ENCODE measurements at regions of chr22 and their contacts with region 1.

Region 1: DNA sequence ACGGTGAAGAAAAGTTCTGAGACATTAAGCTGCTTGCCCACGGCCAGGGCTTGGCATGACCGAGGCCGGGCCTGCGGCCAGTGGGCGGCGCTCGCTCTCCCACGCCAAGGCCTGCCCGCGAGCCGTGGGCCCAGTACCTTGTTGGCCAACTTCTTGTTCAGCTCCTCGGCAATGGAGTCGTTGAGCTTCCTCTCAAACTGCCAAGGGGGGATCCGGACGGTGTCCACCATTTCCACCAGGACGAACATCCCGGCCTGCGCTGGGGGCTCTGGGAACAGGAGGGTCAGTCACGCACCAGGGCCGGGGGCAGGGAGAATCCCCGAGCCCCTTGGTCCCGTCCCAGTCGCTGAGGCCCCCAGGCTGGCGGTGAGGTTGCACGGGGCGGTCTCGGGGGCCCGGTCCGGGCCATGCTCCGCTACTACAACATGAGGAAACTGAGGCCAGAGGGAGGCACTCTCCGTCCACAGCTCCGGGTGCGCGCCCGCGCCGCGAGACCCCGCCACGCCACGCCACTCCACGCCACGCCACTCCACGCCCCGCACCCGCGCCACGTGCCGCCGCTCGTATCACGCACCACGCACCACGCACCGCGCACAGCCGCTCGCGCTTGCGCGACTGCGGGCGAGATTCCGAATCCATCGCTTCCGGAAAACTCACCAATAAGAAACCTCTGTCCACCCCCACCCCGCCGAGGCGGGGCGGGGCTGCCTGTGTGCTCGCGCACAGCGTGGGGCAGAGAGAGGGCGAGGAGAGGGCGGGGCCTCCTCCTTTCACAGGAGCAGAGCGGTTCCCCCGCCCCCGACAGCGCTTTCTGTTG is at the start of gene POLR3H:
- DNase-seq: peak; percentile 98 to 100 (median 99)
- ATAC-seq: peak; percentile 99 to 100 (median 99)
- H3K4me3 ChIP-seq: peak within 1 kb of the TSS; percentile 66 to 88 (median 78)
- H3K27ac ChIP-seq: peak within 1 kb of the TSS; percentile 44 to 92 (median 84)
- H3K4me1 ChIP-seq: peaks cover 0 to 35% (median 22%) of the 10 kb centered on the region in 12 donors
- H3K27me3 ChIP-seq: no peaks in the 10 kb centered on the region
- CTCF ChIP-seq: peak; percentile 36 to 74 (median 64)
- POLR2A ChIP-seq: peak in 1 of 2 donors; percentile 67
- total RNA-seq, gene POLR3H: 12.2 to 27.4 (median 18.3) TPM

Region 2: DNA sequence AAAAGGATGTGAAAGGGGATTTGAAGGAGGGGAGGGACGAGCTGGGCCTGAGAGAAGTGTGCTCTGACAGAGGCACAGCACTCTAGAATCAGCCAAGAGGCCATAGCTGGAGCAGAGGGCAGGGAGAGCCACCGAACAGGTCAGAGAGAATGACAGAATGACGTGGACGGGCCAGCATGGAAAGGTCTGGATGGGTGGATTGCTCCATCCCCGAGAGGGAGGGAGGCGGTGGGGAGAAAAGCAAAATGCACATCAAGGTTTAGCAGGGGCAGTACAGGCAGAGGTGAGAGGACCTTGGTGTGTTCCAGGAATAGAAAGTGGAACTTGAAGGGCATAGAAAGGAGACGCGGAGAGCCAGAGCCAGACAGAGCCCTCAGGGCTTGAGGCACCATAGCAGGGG is 38.6 kb after region 1 on chr22:
- intact Hi-C with region 1: loop called in 1 of 10 experiments (anchors 5 kb)
- DNase-seq: peak in 1 of 5 donors; percentile 56
- ATAC-seq: peak; percentile 2 to 42 (median 32)
- H3K4me3 ChIP-seq: no peak overlapping the region
- H3K27ac ChIP-seq: peak overlapping the region in 9 of 12 donors; percentile 18 to 64 (median 52)
- H3K4me1 ChIP-seq: peaks cover 0 to 19% (median under 1%) of the 10 kb centered on the region in 12 donors
- H3K27me3 ChIP-seq: no peaks in the 10 kb centered on the region
- CTCF ChIP-seq: no peak
- POLR2A ChIP-seq: no peak

Region 3: DNA sequence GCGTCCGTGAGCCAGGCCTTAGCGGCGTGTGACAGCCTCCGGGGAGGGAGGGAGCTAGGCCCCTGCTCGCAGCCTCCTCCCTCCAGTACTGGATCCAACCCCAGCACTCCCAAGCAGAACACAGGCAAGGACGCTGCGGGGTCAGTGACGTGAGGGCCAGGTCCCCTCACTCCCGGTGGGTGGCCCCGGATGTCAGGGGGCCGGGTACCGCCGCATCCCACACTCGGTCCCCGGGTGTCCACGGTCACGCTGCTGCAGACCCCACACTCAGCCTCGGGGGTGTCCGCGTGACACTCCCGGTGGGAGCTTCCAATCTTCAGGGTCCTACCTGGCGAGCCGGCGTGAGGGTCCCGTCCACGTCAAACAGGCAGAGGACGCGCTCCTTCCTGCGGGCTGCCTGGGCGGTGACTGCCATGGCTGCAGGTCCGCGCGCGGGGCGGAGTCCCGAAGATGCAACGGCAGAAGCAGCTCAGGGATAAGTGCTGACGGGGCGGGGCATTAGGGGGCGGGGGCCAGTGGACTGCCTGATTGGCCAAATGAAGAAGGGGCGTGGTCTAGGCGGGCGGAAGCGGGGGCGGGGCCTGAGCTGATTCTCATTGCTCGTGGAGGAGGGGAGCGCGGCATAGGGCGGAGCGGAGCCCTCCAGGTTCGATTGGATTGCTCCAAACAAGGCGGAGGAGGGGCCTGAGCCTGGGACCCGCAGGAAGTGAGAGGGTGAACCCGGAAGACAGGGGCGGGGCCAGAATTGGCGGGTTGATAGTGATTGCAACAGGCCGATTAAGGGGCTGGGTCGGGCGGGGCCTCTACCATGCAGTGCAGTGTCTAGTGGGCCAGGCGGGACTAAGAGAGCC is 45.6 kb after region 1 on chr22 and contains the start of gene PMM1:
- intact Hi-C with region 1: loop called in 4 of 10 experiments (anchors 5 to 10 kb)
- DNase-seq: peak; percentile 100
- ATAC-seq: peak; percentile 99 to 100 (median 99)
- H3K4me3 ChIP-seq: peak within 1 kb of the TSS; percentile 56 to 95 (median 84)
- H3K27ac ChIP-seq: peak within 1 kb of the TSS in 11 of 12 donors; percentile 43 to 89 (median 72)
- H3K4me1 ChIP-seq: peaks cover 0 to 20% (median 8%) of the 10 kb centered on the region in 12 donors
- H3K27me3 ChIP-seq: no peaks in the 10 kb centered on the region
- CTCF ChIP-seq: no peak
- POLR2A ChIP-seq: peak in 1 of 2 donors; percentile 83
- total RNA-seq, gene PMM1: 10.8 to 26.4 (median 22.9) TPM

Region 4: GRCh38 chr22:41596776-41597634 is 52.9 kb after region 1 on chr22:
- intact Hi-C with region 1: loop called in 6 of 10 experiments (anchors 5 to 10 kb)
- DNase-seq: peak; percentile 51 to 76 (median 66)
- ATAC-seq: peak; percentile 70 to 90 (median 89)
- H3K4me3 ChIP-seq: no peak overlapping the region
- H3K27ac ChIP-seq: peak overlapping the region in 10 of 12 donors; percentile 10 to 67 (median 58)
- H3K4me1 ChIP-seq: peaks cover 0 to 15% (median 2%) of the 10 kb centered on the region in 12 donors
- H3K27me3 ChIP-seq: no peaks in the 10 kb centered on the region
- CTCF ChIP-seq: peak; percentile 48 to 76 (median 67)
- POLR2A ChIP-seq: no peak

Region 5: DNA sequence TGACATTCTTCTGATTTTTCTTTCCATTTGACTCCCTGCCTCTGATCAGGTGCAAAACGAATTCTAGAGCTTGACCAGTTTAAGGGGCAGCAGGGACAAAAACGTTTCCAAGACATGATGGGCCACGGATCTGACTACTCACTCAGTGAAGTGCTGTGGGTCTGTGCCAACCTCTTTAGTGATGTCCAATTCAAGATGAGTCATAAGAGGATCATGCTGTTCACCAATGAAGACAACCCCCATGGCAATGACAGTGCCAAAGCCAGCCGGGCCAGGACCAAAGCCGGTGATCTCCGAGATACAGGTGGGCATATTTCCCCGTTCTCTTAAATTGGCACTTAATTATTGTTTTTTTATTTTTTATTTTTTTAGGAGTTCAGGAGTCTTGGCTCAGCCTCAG is 92.4 kb after region 1 on chr22:
- intact Hi-C with region 1: no loop called
- DNase-seq: peak in 4 of 5 donors; percentile 26 to 69 (median 36)
- ATAC-seq: peak; percentile 73 to 89 (median 88)
- H3K4me3 ChIP-seq: no peak overlapping the region
- H3K27ac ChIP-seq: peak overlapping the region in 7 of 12 donors; percentile 25 to 71 (median 58)
- H3K4me1 ChIP-seq: peaks cover 0 to 30% (median 5%) of the 10 kb centered on the region in 12 donors
- H3K27me3 ChIP-seq: no peaks in the 10 kb centered on the region
- CTCF ChIP-seq: no peak
- POLR2A ChIP-seq: no peak

Region 6: GRCh38 chr22:41732096-41732772 is 188.2 kb after region 1 on chr22:
- intact Hi-C with region 1: no loop called
- DNase-seq: no peak
- ATAC-seq: no peak
- H3K4me3 ChIP-seq: no peak overlapping the region
- H3K27ac ChIP-seq: no peak overlapping the region
- H3K4me1 ChIP-seq: no peaks in the 10 kb centered on the region
- H3K27me3 ChIP-seq: no peaks in the 10 kb centered on the region
- CTCF ChIP-seq: no peak
- POLR2A ChIP-seq: no peak

Region 7: DNA sequence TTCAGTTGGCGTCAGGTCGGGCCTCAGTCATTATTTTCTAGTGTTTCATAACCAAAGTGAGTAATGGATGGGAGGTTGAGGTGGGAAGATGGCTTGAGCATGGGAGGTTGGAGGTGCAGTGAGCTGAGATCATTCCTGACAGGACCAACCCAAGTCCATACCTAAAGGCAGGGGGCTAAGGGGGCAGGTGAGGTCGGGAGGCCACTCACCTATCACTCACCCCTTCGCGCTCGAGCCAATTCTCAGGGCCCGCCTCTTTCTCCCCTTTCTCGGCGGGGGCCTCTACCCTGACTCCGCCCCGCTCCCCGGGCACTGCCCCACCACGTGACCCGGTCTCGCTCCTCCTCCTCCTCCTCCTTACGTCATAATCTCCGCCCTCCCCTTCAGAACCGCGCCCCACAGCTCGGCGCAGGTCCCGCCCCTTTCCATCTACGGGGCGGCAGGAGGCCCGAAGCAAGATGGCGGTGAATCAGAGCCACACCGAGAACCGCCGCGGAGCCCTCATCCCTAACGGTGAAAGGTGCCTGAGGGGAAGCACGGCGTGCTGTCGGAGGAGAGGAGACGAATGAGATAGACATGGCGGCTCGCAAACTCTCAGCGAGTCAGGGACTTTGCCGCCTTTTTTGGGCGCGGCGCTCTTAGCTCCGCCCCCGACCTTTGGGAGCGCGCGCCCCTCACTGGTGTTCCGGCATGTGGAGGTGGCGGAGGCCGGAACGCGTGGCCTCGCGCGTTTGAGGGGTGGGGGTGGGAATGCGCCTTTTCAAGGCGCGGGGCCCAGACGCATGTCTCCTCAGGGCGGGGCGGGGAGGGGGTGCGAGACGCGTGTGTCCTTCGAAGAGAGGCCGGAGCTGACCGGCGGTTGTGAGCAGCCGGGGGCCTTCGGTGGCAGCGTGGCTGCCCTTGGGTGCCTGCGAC is 454.6 kb after region 1 on chr22 and contains the start of gene WBP2NL:
- intact Hi-C with region 1: no loop called
- DNase-seq: peak; percentile 78 to 91 (median 82)
- ATAC-seq: peak; percentile 93 to 98 (median 96)
- H3K4me3 ChIP-seq: peak within 1 kb of the TSS; percentile 3 to 69 (median 55)
- H3K27ac ChIP-seq: peak within 1 kb of the TSS in 2 of 12 donors; percentile 3 to 60
- H3K4me1 ChIP-seq: peaks cover 0 to 19% (median 2%) of the 10 kb centered on the region in 12 donors
- H3K27me3 ChIP-seq: peaks cover 0 to 10% (median 0%) of the 10 kb centered on the region in 9 donors
- CTCF ChIP-seq: no peak
- POLR2A ChIP-seq: peak in 1 of 2 donors; percentile 17
- total RNA-seq, gene WBP2NL: 0.30 to 1.1 (median 0.40) TPM in 8 of 9 donors, not detected in the other

Measured in heart left ventricle (tissue), 16 donors.